Caco-2 (cell line): ENCODE measurements at regions of chr13 and their contacts with region 1.

Region 1: DNA sequence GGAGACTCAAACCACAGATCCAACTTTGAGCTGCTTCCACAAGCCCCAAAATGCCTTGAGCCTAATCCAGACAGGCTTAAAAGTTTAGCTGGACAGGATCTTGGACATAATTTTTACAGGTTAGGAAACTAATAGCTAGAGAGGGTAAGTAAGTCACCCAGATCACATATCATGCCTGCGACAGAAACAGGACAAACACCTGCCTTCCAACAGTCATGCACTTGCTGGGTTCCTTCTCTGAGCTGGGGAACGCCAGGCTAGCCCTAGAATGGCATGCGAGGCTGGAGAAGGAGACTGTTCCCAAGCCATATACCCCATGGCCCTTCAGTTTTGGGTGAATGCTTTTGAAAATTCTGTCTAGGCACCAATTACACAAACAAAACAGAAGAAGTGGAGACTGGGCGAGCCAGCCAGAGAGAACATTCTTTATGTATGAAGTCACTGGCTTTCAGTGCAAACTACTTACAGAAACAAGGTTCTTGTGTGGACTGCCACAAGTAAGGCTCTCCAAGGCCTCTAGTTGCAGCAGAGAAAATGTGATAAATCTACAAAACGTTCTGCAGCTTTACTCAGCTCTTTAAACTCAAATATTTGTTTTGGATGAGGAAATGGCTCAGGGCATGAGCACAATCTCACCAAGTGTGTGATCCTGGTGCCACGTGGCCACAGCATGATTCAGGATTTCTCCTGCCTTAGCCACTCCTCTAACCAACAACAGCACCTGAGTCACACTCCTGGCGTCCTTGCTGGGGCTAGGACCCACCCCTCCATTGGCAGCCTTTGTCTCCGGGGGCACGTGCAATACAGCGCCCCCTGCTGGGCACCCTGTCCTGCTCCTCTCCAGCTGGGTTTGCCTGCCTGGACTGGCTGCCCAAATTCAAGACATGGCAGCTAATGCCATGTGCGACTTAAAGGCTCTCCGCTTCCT is 73.4 kb upstream of the UBL3 start:
- DNase-seq: peak; percentile 95 to 97
- H3K4me3 ChIP-seq: no peak overlapping the region
- H3K4me3 Mint-ChIP-seq: peak overlapping the region; percentile 41
- H3K27ac Mint-ChIP-seq: peak overlapping the region; percentile 92
- H3K4me1 ChIP-seq: peaks cover 38% of the 10 kb centered on the region
- H3K4me1 Mint-ChIP-seq: peaks cover 37% of the 10 kb centered on the region
- H3K27me3 ChIP-seq: no peaks in the 10 kb centered on the region
- H3K27me3 Mint-ChIP-seq: no peaks in the 10 kb centered on the region
- CTCF ChIP-seq: peak; percentile 97

Region 2: GRCh38 chr13:29564818-29565217 is 359.0 kb before region 1 on chr13:
- CTCF ChIA-PET with region 1: no interaction called
- POLR2A ChIA-PET with region 1: no interaction called
- intact Hi-C with region 1: no loop called
- DNase-seq: no peak
- H3K4me3 ChIP-seq: no peak overlapping the region
- H3K4me3 Mint-ChIP-seq: no peak overlapping the region
- H3K27ac Mint-ChIP-seq: no peak overlapping the region
- H3K4me1 ChIP-seq: no peaks in the 10 kb centered on the region
- H3K4me1 Mint-ChIP-seq: peaks cover 10% of the 10 kb centered on the region
- H3K27me3 ChIP-seq: no peaks in the 10 kb centered on the region
- H3K27me3 Mint-ChIP-seq: no peaks in the 10 kb centered on the region
- CTCF ChIP-seq: no peak

Region 3: GRCh38 chr13:29771247-29771646 is 152.6 kb before region 1 on chr13:
- CTCF ChIA-PET with region 1: interaction called, 51 read pairs
- POLR2A ChIA-PET with region 1: interaction called, 6 read pairs
- intact Hi-C with region 1: loop called (anchors 1 kb)
- DNase-seq: peak in 1 of 2 experiments; percentile 40
- H3K4me3 ChIP-seq: no peak overlapping the region
- H3K4me3 Mint-ChIP-seq: no peak overlapping the region
- H3K27ac Mint-ChIP-seq: no peak overlapping the region
- H3K4me1 ChIP-seq: no peaks in the 10 kb centered on the region
- H3K4me1 Mint-ChIP-seq: peaks cover 7% of the 10 kb centered on the region
- H3K27me3 ChIP-seq: no peaks in the 10 kb centered on the region
- H3K27me3 Mint-ChIP-seq: no peaks in the 10 kb centered on the region
- CTCF ChIP-seq: peak; percentile 39 to 59

Region 4: DNA sequence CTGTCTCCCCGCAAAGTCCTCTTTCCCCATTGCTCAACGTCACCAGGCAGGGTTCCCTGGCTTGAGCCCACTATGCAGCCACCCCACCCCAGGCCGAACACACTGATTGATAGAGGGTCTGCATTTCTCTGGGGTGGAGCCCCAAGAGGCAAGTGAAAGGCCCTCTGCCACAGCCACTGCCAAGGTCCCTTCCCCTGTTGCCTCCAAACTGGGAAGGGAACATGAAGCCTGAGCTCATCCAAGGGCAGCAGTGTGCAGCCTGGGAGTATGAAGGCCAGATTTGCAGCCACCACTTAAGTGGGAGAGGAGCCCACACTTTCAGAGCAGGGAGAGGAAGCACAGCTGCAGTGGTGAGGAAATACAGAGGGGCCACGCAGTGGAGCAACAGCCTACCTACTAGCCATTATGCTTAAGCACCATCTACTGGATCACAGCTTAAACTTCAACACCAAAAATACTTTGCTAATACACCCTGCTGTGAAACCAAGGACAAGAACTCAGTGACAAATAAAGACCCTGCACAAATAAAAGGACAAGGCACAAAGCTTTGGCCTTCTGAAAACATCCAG is 122.0 kb before region 1 on chr13:
- CTCF ChIA-PET with region 1: no interaction called
- POLR2A ChIA-PET with region 1: no interaction called
- intact Hi-C with region 1: no loop called
- DNase-seq: no peak
- H3K4me3 ChIP-seq: no peak overlapping the region
- H3K4me3 Mint-ChIP-seq: no peak overlapping the region
- H3K27ac Mint-ChIP-seq: peak overlapping the region; percentile 38
- H3K4me1 ChIP-seq: no peaks in the 10 kb centered on the region
- H3K4me1 Mint-ChIP-seq: peaks cover 13% of the 10 kb centered on the region
- H3K27me3 ChIP-seq: no peaks in the 10 kb centered on the region
- H3K27me3 Mint-ChIP-seq: no peaks in the 10 kb centered on the region
- CTCF ChIP-seq: no peak

Region 5: DNA sequence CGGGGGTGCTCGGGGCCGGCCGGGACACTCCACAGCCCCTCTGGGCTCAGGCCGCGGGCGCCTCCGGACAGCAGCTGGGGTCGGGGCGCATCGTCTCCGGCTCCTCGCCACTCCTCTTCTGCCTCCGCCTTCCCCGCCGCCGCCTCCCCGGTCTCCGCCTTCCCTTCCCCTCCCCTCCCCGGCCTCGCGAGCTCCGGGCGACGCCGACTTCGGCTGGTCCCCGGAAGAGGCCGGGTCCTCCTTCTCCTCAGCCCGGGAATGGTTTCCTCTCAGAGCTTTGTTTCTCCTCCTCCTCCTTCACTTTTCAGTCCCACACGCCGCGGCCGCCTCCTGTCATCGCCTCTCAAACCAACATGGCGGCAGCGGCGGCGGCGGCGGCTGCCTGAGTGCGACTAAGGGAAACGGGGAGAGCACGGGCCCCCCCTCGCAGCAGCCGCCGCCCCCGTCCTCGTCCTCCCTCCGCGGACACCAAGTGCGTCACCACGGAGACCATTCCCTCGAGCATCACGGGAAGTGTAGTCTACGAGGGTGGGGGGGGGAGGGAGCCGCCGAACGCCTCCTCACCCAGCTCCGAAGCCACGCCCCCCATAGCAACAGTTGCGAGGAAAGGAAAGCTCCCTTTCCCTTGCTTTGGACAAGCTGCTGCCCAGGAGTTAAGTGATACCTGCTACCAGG is 73.5 kb before region 1 on chr13 and contains the start of gene UBL3:
- CTCF ChIA-PET with region 1: interaction called, 39 read pairs
- POLR2A ChIA-PET with region 1: interaction called, 44 read pairs
- intact Hi-C with region 1: loop called (anchors 1 kb)
- DNase-seq: peak; percentile 95 to 98
- H3K4me3 ChIP-seq: peak within 1 kb of the TSS; percentile 58
- H3K4me3 Mint-ChIP-seq: peak within 1 kb of the TSS; percentile 92
- H3K27ac Mint-ChIP-seq: peak within 1 kb of the TSS; percentile 99
- H3K4me1 ChIP-seq: peaks cover 23% of the 10 kb centered on the region
- H3K4me1 Mint-ChIP-seq: peaks cover 24% of the 10 kb centered on the region
- H3K27me3 ChIP-seq: no peaks in the 10 kb centered on the region
- H3K27me3 Mint-ChIP-seq: no peaks in the 10 kb centered on the region
- CTCF ChIP-seq: no peak
- total RNA-seq, gene UBL3: 37.4 and 37.5 TPM in 2 replicates

Region 6: GRCh38 chr13:29908416-29908815 is 15.4 kb before region 1 on chr13:
- CTCF ChIA-PET with region 1: interaction called, 9 read pairs
- POLR2A ChIA-PET with region 1: no interaction called
- intact Hi-C with region 1: loop called (anchors 2 kb)
- DNase-seq: no peak
- H3K4me3 ChIP-seq: no peak overlapping the region
- H3K4me3 Mint-ChIP-seq: no peak overlapping the region
- H3K27ac Mint-ChIP-seq: no peak overlapping the region
- H3K4me1 ChIP-seq: peaks cover 6% of the 10 kb centered on the region
- H3K4me1 Mint-ChIP-seq: no peaks in the 10 kb centered on the region
- H3K27me3 ChIP-seq: no peaks in the 10 kb centered on the region
- H3K27me3 Mint-ChIP-seq: no peaks in the 10 kb centered on the region
- CTCF ChIP-seq: no peak